CD4-positive, alpha-beta memory T cell (primary cell): ENCODE measurements at regions of chr16 and their contacts with region 1.

Region 1: DNA sequence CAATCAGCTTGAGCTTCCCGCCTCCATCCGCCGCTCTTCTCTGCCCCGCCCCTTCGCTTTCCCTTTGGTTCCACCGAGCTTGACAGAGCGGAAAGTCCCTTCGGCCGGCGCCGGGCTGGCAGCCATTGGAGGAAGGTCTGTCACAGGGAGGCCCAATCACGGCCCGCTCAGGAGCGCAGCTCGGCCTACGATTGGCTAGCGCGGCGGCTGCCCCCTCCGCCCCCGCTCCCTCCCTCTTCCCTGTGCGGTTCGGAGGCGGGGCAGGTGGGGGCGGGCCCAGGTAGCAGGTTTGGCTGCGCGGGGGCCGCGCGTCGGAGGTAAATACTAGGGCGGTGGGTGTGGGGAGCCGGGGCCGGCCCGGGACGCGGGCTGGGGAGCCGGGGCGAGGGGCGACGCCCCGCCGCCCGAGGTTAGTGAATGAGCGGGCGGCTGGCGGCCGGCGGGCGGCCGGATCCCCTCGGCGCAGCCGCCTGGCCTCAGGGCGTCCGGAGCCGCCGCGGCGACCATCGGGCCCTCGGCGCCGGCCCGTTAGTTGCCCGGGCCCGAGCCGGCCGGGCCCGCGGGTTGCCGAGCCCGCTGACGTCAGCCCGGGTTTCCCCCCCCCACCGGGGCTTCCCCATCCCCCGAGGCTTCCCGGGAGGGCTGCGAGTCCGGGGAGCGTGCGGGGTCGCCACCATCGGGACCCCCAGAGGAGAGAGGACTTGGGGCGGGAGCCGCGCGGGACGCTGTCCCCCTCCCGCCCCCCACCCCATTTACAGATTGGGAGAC is at the start of gene CYLD:
- DNase-seq: peak; percentile 99 to 100 (median 100)
- H3K4me3 ChIP-seq: peak within 1 kb of the TSS; percentile 72 to 80
- H3K4me3 Mint-ChIP-seq: peak within 1 kb of the TSS; percentile 95 to 99 (median 98)
- H3K27ac ChIP-seq: peak within 1 kb of the TSS; percentile 100
- H3K27ac Mint-ChIP-seq: peak within 1 kb of the TSS; percentile 95 to 99 (median 99)
- H3K4me1 ChIP-seq: peaks cover 38% of the 10 kb centered on the region
- H3K4me1 Mint-ChIP-seq: peaks cover 22 to 62% (median 35%) of the 10 kb centered on the region in 4 donors
- H3K27me3 ChIP-seq: no peaks in the 10 kb centered on the region
- H3K27me3 Mint-ChIP-seq: no peaks in the 10 kb centered on the region
- total RNA-seq, gene CYLD: 294 to 299 TPM

Region 2: GRCh38 chr16:50065624-50066481 is 676.1 kb before region 1 on chr16 and contains the start of gene HEATR3:
- CTCF ChIA-PET with region 1: no interaction called
- POLR2A ChIA-PET with region 1: no interaction called
- intact Hi-C with region 1: loop called (anchors 5 kb)
- DNase-seq: peak; percentile 89 to 92 (median 91)
- H3K4me3 ChIP-seq: peak within 1 kb of the TSS; percentile 82 to 98
- H3K4me3 Mint-ChIP-seq: peak within 1 kb of the TSS; percentile 90 to 97 (median 93)
- H3K27ac ChIP-seq: peak within 1 kb of the TSS; percentile 79
- H3K27ac Mint-ChIP-seq: peak within 1 kb of the TSS; percentile 77 to 96 (median 94)
- H3K4me1 ChIP-seq: peaks cover 33% of the 10 kb centered on the region
- H3K4me1 Mint-ChIP-seq: peaks cover 28 to 47% (median 35%) of the 10 kb centered on the region in 4 donors
- H3K27me3 ChIP-seq: no peaks in the 10 kb centered on the region
- H3K27me3 Mint-ChIP-seq: no peaks in the 10 kb centered on the region
- total RNA-seq, gene HEATR3: 20.5 to 25.6 TPM

Region 3: DNA sequence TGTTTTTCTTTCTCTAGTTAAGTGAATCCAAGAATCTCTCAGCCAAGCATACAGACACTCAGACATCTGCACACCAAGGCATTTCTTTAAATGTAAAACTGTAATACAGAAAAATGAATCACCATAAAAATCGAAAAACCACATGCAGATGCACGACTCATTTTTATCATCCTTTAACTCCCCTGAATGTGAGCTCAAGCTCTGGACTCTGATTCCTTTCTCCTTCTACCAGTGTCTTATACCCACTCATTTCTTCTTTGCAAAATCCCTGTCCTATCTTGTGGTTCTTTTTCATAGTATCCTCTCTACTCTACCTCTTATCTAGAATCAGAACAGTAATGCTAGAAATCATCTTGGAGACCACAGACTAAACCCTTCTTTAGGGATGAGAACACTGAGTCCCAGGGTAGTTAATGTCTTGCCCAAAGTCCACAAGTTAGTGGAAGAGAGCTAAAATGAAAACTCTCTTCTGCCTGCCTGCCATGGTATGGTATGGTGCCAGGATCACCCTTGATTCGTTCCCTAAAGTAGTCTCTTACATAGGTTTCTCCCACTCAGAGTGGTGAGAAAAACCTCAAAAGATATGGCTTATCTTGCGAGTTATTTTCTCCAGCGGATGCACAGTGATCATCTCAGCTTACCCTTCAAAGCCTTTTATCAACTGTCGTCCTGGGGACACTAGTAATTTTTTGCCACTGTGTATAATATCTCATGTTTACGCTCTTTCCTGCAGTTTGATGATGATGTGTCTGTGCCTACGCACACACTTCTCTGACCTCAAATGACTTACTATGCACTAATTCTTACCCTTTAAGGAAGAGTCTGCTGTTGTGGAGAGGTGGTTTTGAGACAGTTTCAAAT is 403.4 kb before region 1 on chr16:
- CTCF ChIA-PET with region 1: no interaction called
- POLR2A ChIA-PET with region 1: interaction called, 10 read pairs
- intact Hi-C with region 1: no loop called
- DNase-seq: peak; percentile 51 to 86 (median 73)
- H3K4me3 ChIP-seq: no peak overlapping the region
- H3K4me3 Mint-ChIP-seq: peak overlapping the region; percentile 2 to 72 (median 49)
- H3K27ac ChIP-seq: peak overlapping the region; percentile 79
- H3K27ac Mint-ChIP-seq: peak overlapping the region; percentile 88 to 99 (median 95)
- H3K4me1 ChIP-seq: peaks cover 34% of the 10 kb centered on the region
- H3K4me1 Mint-ChIP-seq: peaks cover 25 to 61% (median 44%) of the 10 kb centered on the region in 4 donors
- H3K27me3 ChIP-seq: no peaks in the 10 kb centered on the region
- H3K27me3 Mint-ChIP-seq: no peaks in the 10 kb centered on the region

Region 4: GRCh38 chr16:50696575-50697420 is 45.2 kb before region 1 on chr16:
- CTCF ChIA-PET with region 1: interaction called, 7 read pairs
- POLR2A ChIA-PET with region 1: interaction called, 67 read pairs
- intact Hi-C with region 1: loop called (anchors 1 kb)
- DNase-seq: peak; percentile 67 to 90 (median 71)
- H3K4me3 ChIP-seq: peak overlapping the region; percentile 48 to 89
- H3K4me3 Mint-ChIP-seq: peak overlapping the region; percentile 87 to 96 (median 93)
- H3K27ac ChIP-seq: peak overlapping the region; percentile 88
- H3K27ac Mint-ChIP-seq: peak overlapping the region; percentile 85 to 99 (median 95)
- H3K4me1 ChIP-seq: peaks cover 79% of the 10 kb centered on the region
- H3K4me1 Mint-ChIP-seq: peaks cover 60 to 93% (median 81%) of the 10 kb centered on the region in 4 donors
- H3K27me3 ChIP-seq: no peaks in the 10 kb centered on the region
- H3K27me3 Mint-ChIP-seq: no peaks in the 10 kb centered on the region

Region 5: DNA sequence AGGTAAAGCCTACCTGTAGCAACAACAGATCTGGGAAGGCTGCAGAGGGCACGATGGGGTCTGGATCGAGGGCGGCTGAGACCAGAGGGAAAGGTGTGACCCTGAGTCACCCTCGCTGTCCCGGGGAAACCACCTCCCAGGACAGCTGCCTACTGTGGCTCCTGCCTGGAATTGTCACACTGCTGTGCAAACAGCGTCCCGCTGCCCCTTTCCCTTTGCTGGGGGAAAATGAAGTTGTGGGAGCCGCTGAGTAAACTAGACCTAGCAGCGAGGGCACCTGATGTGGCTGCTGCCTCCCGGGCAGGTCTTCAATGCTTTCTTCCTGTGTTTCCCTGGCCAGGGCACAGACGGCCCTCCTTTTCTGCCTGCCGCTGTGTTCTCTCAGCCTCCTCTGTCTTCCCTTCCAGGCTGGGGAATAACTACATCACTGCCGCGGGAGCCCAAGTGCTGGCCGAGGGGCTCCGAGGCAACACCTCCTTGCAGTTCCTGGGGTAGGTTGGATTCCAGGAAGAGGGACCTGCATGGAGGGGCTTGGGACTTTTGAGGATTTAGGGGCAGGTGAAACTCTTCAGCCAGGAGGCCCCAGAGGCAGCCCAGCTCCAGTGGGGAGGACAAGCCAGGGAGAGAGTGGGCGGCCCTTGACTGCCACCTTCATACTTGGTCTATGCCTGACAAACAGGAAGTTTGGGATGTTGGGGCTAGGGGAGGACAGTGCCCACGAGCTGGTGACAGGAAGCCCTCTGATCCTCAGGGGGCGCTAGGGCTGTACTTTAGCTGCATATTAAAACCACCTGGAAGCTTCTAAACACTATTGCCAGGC is 22.3 kb before region 1 on chr16:
- CTCF ChIA-PET with region 1: interaction called, 27 read pairs
- POLR2A ChIA-PET with region 1: interaction called, 14 read pairs
- intact Hi-C with region 1: loop called (anchors 1 kb)
- DNase-seq: no peak
- H3K4me3 ChIP-seq: no peak overlapping the region
- H3K4me3 Mint-ChIP-seq: no peak overlapping the region
- H3K27ac ChIP-seq: no peak overlapping the region
- H3K27ac Mint-ChIP-seq: peak overlapping the region in 3 of 7 donors; percentile 46 to 74 (median 68)
- H3K4me1 ChIP-seq: peaks cover 12% of the 10 kb centered on the region
- H3K4me1 Mint-ChIP-seq: peaks cover 12 to 35% (median 23%) of the 10 kb centered on the region in 4 donors
- H3K27me3 ChIP-seq: no peaks in the 10 kb centered on the region
- H3K27me3 Mint-ChIP-seq: no peaks in the 10 kb centered on the region